Activated CD8-positive, alpha-beta memory T cell treated with anti-CD3 and anti-CD28 coated beads, Interleukin-2, amount 10 ng/mL, durations not matched to agents 7 days and 5 days (primary cell): ENCODE measurements at regions of chr11 and their contacts with region 1.

Region 1: DNA sequence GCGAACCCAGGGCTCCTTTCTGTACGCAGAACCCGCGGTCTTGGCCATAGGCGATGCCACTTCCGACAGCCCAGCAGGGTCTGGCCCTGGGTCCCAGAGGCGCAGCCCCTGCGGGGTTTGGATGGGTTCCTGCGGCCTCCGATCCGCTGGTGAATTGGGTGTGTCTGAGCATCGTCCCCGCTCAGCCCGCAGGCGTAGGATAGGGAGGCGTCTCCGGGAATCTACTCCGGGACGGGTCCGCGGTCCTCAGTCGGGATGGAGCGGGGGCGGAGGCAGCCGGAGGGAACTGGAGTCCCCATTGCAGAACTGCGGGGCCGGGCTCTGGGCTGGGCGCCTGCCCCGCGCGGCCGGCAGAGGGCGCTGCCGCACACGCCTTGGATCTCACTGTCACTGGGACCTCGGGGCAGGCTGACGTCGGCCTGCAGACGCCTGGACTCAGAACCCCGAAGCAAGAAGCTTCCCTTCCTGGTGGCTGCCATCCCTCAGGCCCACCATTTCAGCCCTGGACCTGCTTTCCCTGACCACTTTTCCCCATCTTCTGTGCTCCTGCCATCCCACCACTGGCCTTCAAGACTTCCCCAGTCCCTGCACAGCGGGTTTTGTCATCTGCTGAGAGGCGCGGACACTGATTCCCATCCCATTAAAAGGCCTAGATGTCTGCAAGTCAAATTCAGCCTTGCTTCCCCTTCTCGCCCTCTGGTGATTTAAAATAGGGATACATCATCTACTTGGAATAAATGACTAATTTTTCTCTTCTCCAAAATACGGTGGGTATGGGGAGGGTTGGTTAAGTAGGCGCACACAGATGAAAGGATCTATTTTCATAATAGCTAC is 38.3 kb upstream of the CREB3L1 start:
- DNase-seq: peak; percentile 86
- ATAC-seq: peak; percentile 78
- H3K4me3 Mint-ChIP-seq: peak overlapping the region; percentile 64
- H3K27ac Mint-ChIP-seq: peak overlapping the region; percentile 55
- H3K4me1 Mint-ChIP-seq: peaks cover 41% of the 10 kb centered on the region
- H3K27me3 Mint-ChIP-seq: peaks cover 17% of the 10 kb centered on the region

Region 2: DNA sequence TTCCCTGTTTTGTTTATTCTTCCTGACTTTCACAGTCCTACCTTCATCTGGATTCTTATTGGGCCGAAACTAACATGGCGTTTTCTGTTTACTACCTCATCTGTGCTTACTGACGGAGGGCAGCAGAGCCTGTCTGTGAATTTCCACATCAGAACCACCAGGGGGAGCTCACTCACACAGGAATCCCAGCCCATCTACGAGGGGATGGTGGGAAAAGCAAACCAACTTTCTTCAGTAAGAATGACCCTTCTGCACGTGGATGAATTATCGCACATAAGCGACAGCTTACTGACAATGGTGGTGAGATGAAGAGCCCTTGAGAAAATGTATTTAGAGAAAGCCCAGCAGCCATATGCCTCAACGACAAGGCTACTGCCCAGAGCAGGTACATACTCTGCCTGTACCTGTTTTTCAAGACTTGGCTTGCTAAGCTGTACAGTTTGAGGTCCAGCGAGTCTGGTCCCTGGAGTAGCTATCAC is 274.2 kb before region 1 on chr11:
- CTCF ChIA-PET with region 1: interaction called, 17 read pairs
- DNase-seq: peak; percentile 69
- ATAC-seq: peak; percentile 94
- H3K4me3 Mint-ChIP-seq: no peak overlapping the region
- H3K27ac Mint-ChIP-seq: no peak overlapping the region
- H3K4me1 Mint-ChIP-seq: no peaks in the 10 kb centered on the region
- H3K27me3 Mint-ChIP-seq: no peaks in the 10 kb centered on the region

Region 3: DNA sequence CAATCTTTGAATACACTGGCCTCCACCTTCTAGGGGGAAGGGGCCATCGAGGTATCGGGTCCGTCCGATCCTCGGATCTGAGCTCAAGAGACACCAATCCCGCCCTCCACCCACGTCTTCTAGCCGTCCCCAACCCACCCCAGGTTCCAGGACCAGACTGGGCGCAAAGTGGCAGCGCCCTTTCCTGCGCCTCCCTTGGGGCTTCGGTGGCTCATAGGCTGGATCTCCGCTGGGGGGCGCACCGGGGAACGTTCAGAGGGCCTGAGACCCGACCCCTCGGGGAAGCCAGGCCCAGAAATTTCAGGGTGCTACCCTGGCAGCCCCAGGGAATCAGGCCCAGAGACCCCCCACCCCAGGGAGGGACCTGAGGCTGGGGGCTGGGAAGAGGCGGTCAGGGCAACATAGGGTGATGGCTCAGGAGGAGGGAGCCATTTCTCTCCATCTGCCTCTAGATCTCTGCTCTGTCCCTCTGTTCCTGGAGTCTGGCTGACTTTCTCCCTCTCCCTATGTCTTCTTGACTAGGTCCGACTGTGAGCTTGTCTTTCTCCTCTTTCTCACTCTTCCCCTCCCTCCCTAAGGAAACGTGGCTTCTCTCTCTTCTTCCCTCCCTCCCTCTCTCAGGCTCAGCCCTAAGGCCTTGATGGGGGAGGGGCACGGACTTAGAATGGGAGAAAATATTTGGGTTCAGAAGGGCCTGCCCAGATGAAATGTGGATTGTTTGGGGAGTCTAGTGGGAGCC is 39.4 kb after region 1 on chr11:
- CTCF ChIA-PET with region 1: interaction called, 18 read pairs
- DNase-seq: no peak
- ATAC-seq: no peak
- H3K4me3 Mint-ChIP-seq: no peak overlapping the region
- H3K27ac Mint-ChIP-seq: no peak overlapping the region
- H3K4me1 Mint-ChIP-seq: no peaks in the 10 kb centered on the region
- H3K27me3 Mint-ChIP-seq: peaks cover 68% of the 10 kb centered on the region

Region 4: GRCh38 chr11:46308631-46309419 is 69.6 kb after region 1 on chr11:
- CTCF ChIA-PET with region 1: interaction called, 189 read pairs
- DNase-seq: peak; percentile 80
- ATAC-seq: peak; percentile 85
- H3K4me3 Mint-ChIP-seq: no peak overlapping the region
- H3K27ac Mint-ChIP-seq: no peak overlapping the region
- H3K4me1 Mint-ChIP-seq: peaks cover 9% of the 10 kb centered on the region
- H3K27me3 Mint-ChIP-seq: peaks cover 5% of the 10 kb centered on the region

Region 5: GRCh38 chr11:46346886-46347636 is 107.9 kb after region 1 on chr11 and contains the start of gene DGKZ:
- CTCF ChIA-PET with region 1: interaction called, 21 read pairs
- DNase-seq: peak; percentile 88
- ATAC-seq: peak; percentile 75
- H3K4me3 Mint-ChIP-seq: peak within 1 kb of the TSS; percentile 89
- H3K27ac Mint-ChIP-seq: peak within 1 kb of the TSS; percentile 94
- H3K4me1 Mint-ChIP-seq: peaks cover 66% of the 10 kb centered on the region
- H3K27me3 Mint-ChIP-seq: peaks cover 21% of the 10 kb centered on the region
- total RNA-seq, gene DGKZ: 96.9 to 132 TPM